ENCODE measurements at regions of chr15 and their contacts with region 1.

Region 1: DNA sequence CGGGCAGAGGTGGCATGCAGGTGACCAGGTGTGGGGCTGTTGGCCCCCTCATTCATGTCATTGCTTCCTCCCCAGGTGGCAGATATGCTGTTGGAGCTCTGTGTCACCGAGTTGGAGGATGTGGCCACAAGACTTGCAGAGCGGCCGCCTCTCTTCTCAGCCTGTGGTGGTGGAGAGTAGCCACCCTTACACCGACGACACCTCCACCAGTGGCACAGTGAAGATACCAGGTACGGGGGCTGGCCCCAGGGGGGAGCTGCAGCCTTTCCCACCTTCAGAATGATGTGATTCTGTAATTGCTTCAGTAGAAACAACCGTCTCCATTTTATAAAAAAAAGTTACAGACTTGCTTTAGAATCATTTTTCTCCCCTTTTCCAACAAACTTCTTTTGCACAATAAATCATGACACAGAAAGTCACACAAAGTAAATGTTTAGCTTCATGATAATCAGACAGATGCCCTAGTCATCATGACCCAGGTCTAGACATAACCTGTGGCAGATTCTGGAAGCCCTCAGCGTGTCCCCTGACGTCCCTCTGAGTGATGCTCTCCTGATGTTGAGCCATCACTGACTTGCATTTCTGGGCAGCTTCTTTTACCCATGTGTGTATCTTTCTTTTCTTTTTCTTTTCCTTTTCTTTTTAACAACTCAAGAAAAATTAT is 76.0 kb upstream of the FAN1 start:
- DNase-seq: no peak

Region 2: DNA sequence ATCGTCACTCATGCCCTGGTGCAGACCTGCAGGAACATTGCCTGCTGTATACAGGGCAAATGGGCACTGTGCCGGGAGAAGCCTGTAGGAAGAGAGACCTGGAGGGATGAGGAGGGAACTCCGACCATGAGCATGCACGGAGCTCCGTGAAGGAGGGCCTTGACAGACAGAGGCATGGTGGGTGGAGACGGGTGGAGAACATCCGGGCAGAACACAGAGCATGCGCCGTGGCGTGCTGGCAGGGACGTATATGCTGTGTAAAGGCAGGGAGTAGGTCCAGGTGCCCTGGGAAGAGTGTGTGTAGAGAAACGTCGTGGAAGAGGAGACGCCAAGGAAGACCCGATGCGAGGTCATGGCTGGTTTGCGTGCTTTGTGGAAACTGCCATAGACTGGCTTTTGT is 57.0 kb before region 1 on chr15:
- intact Hi-C with region 1: no loop called
- DNase-seq: no peak

Region 3: GRCh38 chr15:30859091-30859874 is 31.5 kb after region 1 on chr15:
- intact Hi-C with region 1: no loop called
- DNase-seq: no peak

Region 4: DNA sequence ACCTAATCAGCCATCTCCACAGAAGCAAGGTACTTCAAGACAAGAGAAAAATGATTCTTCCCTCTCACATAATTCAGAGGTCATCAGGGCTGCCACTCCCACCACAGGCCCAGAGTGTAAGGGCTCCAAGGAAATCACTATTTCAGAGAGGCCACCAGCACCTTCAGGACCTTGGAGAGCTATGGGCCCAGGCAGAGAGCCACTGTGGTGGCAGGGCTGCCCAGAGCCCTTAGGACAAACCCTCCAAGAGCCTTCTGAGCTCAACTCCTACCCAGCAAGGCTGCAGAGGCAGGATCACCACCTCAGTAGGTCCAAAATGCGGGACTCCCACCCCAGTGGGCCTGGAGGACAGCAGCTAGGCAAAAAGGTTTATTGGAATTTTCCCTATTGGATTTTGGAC is 58.1 kb after region 1 on chr15:
- intact Hi-C with region 1: loop called in 1 of 2 experiments (anchors 2 kb)
- DNase-seq: no peak

Measured in posterior vena cava (tissue), 2 donors.